CD8-positive, alpha-beta T cell (primary cell): ENCODE measurements at regions of chr4 and their contacts with region 1.

Region 1: DNA sequence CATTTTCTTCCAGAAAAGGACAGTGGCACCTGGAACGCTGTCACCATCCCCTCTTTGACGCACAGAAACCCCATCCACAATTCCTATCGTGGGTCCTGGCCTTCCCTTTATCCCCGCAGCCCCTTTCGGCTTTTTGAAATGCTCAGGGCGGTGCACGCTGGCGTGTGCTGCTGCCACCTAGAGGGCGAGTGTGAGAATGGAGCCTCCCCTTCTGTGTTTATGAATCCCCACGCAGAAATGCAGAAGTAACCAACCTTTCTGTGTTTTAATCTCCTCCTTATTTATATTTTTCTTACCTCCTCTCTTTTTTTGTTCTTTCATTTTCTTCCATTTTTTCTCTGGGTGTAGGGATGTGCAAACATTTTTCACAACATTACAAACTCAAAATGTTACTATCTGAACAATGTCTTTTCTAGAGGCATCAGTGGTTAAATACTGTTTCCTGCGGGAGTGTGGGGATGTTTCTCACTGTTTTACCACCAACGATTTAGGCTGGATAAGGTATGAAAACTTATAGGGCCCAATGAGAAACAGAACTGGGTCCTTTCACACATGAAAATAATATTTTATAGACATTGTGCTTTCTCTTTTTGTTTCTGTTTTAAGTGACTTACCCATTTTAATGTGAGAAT is 50.0 kb downstream of the TMA16 start:
- DNase-seq: peak; percentile 12 to 76 (median 61)
- ATAC-seq: peak; percentile 93
- H3K4me3 ChIP-seq: peak overlapping the region; percentile 20 to 34
- H3K4me3 Mint-ChIP-seq: no peak overlapping the region
- H3K27ac ChIP-seq: peak overlapping the region in 1 of 2 experiments; percentile 11
- H3K27ac Mint-ChIP-seq: no peak overlapping the region
- H3K4me1 ChIP-seq: peaks cover 6% of the 10 kb centered on the region
- H3K4me1 Mint-ChIP-seq: peaks cover 6% of the 10 kb centered on the region
- H3K27me3 ChIP-seq: no peaks in the 10 kb centered on the region
- H3K27me3 Mint-ChIP-seq: no peaks in the 10 kb centered on the region
- CTCF ChIP-seq: peak; percentile 94

Region 2: DNA sequence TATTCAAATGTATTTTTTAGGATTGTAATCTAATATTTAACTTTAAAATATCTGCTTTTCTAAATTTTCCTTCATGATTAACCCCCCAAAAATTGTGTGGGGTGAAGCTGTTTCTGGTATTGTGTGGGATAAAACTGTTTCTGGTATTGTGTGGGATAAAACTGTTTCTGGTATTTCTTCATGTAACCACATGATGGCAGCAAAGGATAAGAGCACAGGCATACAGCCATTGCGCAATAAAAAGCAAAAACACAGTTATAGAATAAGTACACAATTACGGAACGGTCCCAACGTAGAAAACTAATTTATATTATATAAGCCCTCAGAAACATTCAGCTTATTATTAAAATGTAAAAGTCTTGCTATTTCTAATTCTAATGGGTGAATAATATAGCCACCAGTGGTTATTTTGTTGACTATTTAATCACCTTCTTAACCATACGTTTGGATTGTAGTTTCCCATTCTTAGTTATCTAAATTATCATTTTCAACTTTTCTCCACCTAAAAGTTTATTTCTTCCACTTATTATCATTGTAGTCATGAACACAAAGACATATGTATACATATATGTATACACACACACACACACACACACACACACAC is 1046.9 kb before region 1 on chr4:
- CTCF ChIA-PET with region 1: no interaction called
- POLR2A ChIA-PET with region 1: no interaction called
- intact Hi-C with region 1: loop called in 1 of 2 experiments (anchors 5 kb)
- DNase-seq: peak in 2 of 9 experiments; percentile 26 to 44
- ATAC-seq: no peak
- H3K4me3 ChIP-seq: no peak overlapping the region
- H3K4me3 Mint-ChIP-seq: no peak overlapping the region
- H3K27ac ChIP-seq: no peak overlapping the region
- H3K27ac Mint-ChIP-seq: no peak overlapping the region
- H3K4me1 ChIP-seq: no peaks in the 10 kb centered on the region
- H3K4me1 Mint-ChIP-seq: no peaks in the 10 kb centered on the region
- H3K27me3 ChIP-seq: no peaks in the 10 kb centered on the region
- H3K27me3 Mint-ChIP-seq: peaks cover 2% of the 10 kb centered on the region
- CTCF ChIP-seq: peak; percentile 61

Region 3: GRCh38 chr4:163107754-163108153 is 436.8 kb before region 1 on chr4:
- CTCF ChIA-PET with region 1: no interaction called
- POLR2A ChIA-PET with region 1: no interaction called
- intact Hi-C with region 1: loop called in 1 of 2 experiments (anchors 5 kb)
- DNase-seq: peak in 2 of 9 experiments; percentile 7
- ATAC-seq: no peak
- H3K4me3 ChIP-seq: no peak overlapping the region
- H3K4me3 Mint-ChIP-seq: no peak overlapping the region
- H3K27ac ChIP-seq: no peak overlapping the region
- H3K27ac Mint-ChIP-seq: no peak overlapping the region
- H3K4me1 ChIP-seq: no peaks in the 10 kb centered on the region
- H3K4me1 Mint-ChIP-seq: peaks cover 5% of the 10 kb centered on the region
- H3K27me3 ChIP-seq: no peaks in the 10 kb centered on the region
- H3K27me3 Mint-ChIP-seq: no peaks in the 10 kb centered on the region
- CTCF ChIP-seq: no peak

Region 4: GRCh38 chr4:163484906-163485305 is 59.6 kb before region 1 on chr4:
- CTCF ChIA-PET with region 1: interaction called, 62 read pairs
- POLR2A ChIA-PET with region 1: interaction called, 3 read pairs
- intact Hi-C with region 1: loop called (anchors 1 kb)
- DNase-seq: peak; percentile 22 to 78 (median 61)
- ATAC-seq: peak; percentile 67
- H3K4me3 ChIP-seq: no peak overlapping the region
- H3K4me3 Mint-ChIP-seq: no peak overlapping the region
- H3K27ac ChIP-seq: no peak overlapping the region
- H3K27ac Mint-ChIP-seq: no peak overlapping the region
- H3K4me1 ChIP-seq: no peaks in the 10 kb centered on the region
- H3K4me1 Mint-ChIP-seq: no peaks in the 10 kb centered on the region
- H3K27me3 ChIP-seq: no peaks in the 10 kb centered on the region
- H3K27me3 Mint-ChIP-seq: peaks cover 3% of the 10 kb centered on the region
- CTCF ChIP-seq: peak; percentile 81

Region 5: GRCh38 chr4:163681208-163681821 is 136.8 kb after region 1 on chr4:
- CTCF ChIA-PET with region 1: interaction called, 129 read pairs
- POLR2A ChIA-PET with region 1: no interaction called
- intact Hi-C with region 1: no loop called
- DNase-seq: peak in 4 of 9 experiments; percentile 13 to 73 (median 50)
- ATAC-seq: peak; percentile 55
- H3K4me3 ChIP-seq: no peak overlapping the region
- H3K4me3 Mint-ChIP-seq: no peak overlapping the region
- H3K27ac ChIP-seq: no peak overlapping the region
- H3K27ac Mint-ChIP-seq: no peak overlapping the region
- H3K4me1 ChIP-seq: no peaks in the 10 kb centered on the region
- H3K4me1 Mint-ChIP-seq: no peaks in the 10 kb centered on the region
- H3K27me3 ChIP-seq: no peaks in the 10 kb centered on the region
- H3K27me3 Mint-ChIP-seq: peaks cover 3% of the 10 kb centered on the region
- CTCF ChIP-seq: peak; percentile 74

Region 6: DNA sequence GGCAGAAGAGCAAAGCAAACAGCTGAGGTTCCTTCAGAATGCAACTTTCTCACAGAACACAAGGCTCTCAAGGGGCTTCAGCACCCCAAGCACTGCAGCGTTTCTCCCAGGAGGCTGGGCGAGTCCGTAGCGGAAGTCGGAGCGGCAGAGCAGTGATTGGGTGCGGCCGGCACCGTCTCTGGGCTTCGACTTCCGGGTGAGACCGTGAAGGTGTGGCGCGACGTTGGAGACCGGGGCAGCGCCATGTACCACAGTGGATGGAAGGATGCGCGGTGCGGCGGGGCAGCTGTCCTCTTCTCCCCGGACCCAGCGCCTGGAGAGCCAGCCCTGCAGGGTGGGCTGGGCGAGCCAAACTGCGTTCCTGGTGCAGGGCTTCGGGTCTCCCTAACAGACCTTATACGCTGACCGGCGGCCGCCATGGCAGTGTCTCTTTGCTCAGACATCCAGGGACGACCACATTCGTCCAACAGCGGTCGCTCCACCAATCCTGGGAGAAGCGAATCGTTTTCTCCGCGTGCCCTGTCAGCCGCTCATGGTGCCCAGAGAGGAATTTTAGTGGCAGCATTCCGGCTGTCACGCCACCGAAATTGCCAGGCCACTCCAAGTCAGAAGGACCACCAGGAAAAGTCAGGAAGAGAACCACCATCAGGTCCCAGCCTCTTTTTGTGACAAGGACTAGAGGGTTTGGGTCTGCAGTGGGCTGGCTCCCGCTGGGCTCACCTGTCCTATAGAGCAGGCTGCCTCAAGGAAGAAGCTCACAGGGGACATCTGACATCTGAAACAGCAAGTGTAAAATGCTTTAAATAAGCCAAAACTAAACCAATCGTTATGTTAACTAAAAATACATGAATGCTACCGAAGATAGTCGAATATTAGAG is 1412.5 kb after region 1 on chr4:
- CTCF ChIA-PET with region 1: no interaction called
- POLR2A ChIA-PET with region 1: no interaction called
- intact Hi-C with region 1: loop called in 1 of 2 experiments (anchors 10 kb)
- DNase-seq: peak; percentile 34 to 86 (median 74)
- ATAC-seq: peak; percentile 99
- H3K4me3 ChIP-seq: peak overlapping the region; percentile 68 to 87
- H3K4me3 Mint-ChIP-seq: peak overlapping the region; percentile 87
- H3K27ac ChIP-seq: peak overlapping the region; percentile 7 to 8
- H3K27ac Mint-ChIP-seq: peak overlapping the region; percentile 84
- H3K4me1 ChIP-seq: peaks cover 18% of the 10 kb centered on the region
- H3K4me1 Mint-ChIP-seq: peaks cover 22% of the 10 kb centered on the region
- H3K27me3 ChIP-seq: no peaks in the 10 kb centered on the region
- H3K27me3 Mint-ChIP-seq: peaks cover 7% of the 10 kb centered on the region
- CTCF ChIP-seq: no peak